T-cell (primary cell): ENCODE measurements at regions of chr20 and their contacts with region 1.

Region 1: GRCh38 chr20:50115591-50116372 is 2.8 kb upstream of the UBE2V1 start:
- DNase-seq: peak; percentile 80 to 92 (median 87)
- ATAC-seq: peak; percentile 77 to 85 (median 80)
- H3K4me3 ChIP-seq: peak overlapping the region; percentile 47 to 55
- H3K4me3 Mint-ChIP-seq: peak overlapping the region; percentile 82 to 94 (median 86)
- H3K27ac ChIP-seq: peak overlapping the region; percentile 54
- H3K27ac Mint-ChIP-seq: peak overlapping the region; percentile 91 to 94
- H3K4me1 ChIP-seq: peaks cover 30 to 43% of the 10 kb centered on the region in 2 experiments
- H3K4me1 Mint-ChIP-seq: peaks cover 51 to 55% (median 52%) of the 10 kb centered on the region in 3 donors
- H3K27me3 ChIP-seq: no peaks in the 10 kb centered on the region
- H3K27me3 Mint-ChIP-seq: no peaks in the 10 kb centered on the region

Region 2: GRCh38 chr20:50179507-50180016 is 63.8 kb after region 1 on chr20:
- CTCF ChIA-PET with region 1: interaction called, 5 to 55 read pairs
- POLR2A ChIA-PET with region 1: interaction called in 1 of 2 experiments, 5 read pairs
- DNase-seq: no peak
- ATAC-seq: peak in 1 of 4 experiments; percentile 12
- H3K4me3 ChIP-seq: no peak overlapping the region
- H3K4me3 Mint-ChIP-seq: no peak overlapping the region
- H3K27ac ChIP-seq: no peak overlapping the region
- H3K27ac Mint-ChIP-seq: no peak overlapping the region
- H3K4me1 ChIP-seq: peaks cover 0 to 2% of the 10 kb centered on the region in 2 experiments
- H3K4me1 Mint-ChIP-seq: no peaks in the 10 kb centered on the region
- H3K27me3 ChIP-seq: peaks cover 0 to 13% of the 10 kb centered on the region in 2 experiments
- H3K27me3 Mint-ChIP-seq: peaks cover 0 to 8% of the 10 kb centered on the region in 2 donors

Region 3: GRCh38 chr20:50635667-50636503 is 520.1 kb after region 1 on chr20:
- CTCF ChIA-PET with region 1: no interaction called
- POLR2A ChIA-PET with region 1: no interaction called
- DNase-seq: peak in 32 of 35 experiments; percentile 2 to 60 (median 34)
- ATAC-seq: peak in 2 of 4 experiments; percentile 37 to 52
- H3K4me3 ChIP-seq: no peak overlapping the region
- H3K4me3 Mint-ChIP-seq: no peak overlapping the region
- H3K27ac ChIP-seq: no peak overlapping the region
- H3K27ac Mint-ChIP-seq: no peak overlapping the region
- H3K4me1 ChIP-seq: no peaks in the 10 kb centered on the region
- H3K4me1 Mint-ChIP-seq: peaks cover 0 to 6% (median 0%) of the 10 kb centered on the region in 3 donors
- H3K27me3 ChIP-seq: peaks cover 0 to 14% of the 10 kb centered on the region in 2 experiments
- H3K27me3 Mint-ChIP-seq: peaks cover 0 to 1% of the 10 kb centered on the region in 2 donors